ENCODE measurements at regions of chr4 and their contacts with region 1.

Region 1: GRCh38 chr4:71186566-71187403 is 152.0 kb upstream of the SLC4A4 start:
- DNase-seq: peak in 6 of 10 donors; percentile 15 to 64 (median 43)
- H3K4me3 ChIP-seq: peak overlapping the region; percentile 43 to 89 (median 73)
- H3K27ac ChIP-seq: peak overlapping the region in 51 of 59 donors; percentile 7 to 84 (median 64)
- H3K27me3 ChIP-seq: peaks cover 0 to 8% (median 0%) of the 10 kb centered on the region in 45 donors
- CTCF ChIP-seq: peak in 1 of 56 donors; percentile 11

Region 2: GRCh38 chr4:71713611-71714203 is 526.9 kb after region 1 on chr4:
- intact Hi-C with region 1: loop called (anchors 5 kb)
- DNase-seq: no peak
- H3K4me3 ChIP-seq: no peak overlapping the region
- H3K27ac ChIP-seq: no peak overlapping the region
- H3K27me3 ChIP-seq: no peaks in the 10 kb centered on the region
- CTCF ChIP-seq: peak; percentile 45 to 85 (median 69)